ENCODE measurements at regions of chrX and their contacts with region 1.

Region 1: DNA sequence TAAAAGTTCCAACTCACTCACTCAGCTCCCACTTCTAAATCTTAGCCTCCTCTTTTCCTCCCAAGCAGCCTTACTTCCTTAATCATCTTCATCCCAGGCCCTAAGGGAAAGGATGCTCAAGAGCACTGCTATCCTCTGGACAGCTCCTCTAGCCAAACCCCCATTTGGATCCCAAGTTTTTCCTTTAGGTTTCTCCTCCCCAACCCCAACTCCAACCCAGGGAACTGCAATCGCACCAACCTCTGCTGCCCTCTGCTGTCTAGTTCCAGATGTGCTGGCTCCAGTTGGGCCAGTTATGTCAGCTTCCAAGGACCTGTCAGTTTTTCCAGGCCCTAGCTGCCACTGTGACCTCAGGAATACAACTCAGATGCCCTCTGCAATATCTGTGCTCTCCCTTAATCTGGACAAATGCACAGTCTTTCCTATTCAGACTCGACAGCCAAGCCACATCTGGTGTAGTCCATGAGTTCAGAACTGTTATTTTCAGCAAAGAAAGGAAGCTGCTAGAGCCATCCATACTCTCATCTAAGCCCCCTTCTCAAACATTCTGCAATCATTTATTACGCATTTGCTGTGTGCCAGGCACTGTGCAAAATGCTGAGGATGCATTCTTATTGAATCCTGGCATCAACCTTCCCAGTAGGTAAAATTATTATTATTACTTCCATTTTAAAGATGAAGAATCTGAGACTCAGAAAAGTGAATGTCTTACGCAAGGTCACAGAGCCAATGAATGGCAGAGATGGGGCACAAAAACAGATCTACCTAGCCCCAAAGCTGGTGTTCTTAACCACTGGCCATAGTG is 12.3 kb upstream of the XPNPEP2 start:
- DNase-seq: peak; percentile 52
- H3K27ac ChIP-seq: no peak overlapping the region
- CTCF ChIP-seq: peak; percentile 55

Region 2: GRCh38 chrX:129606918-129607317 is 119.6 kb before region 1 on chrX:
- CTCF ChIA-PET with region 1: interaction called, 19 read pairs
- POLR2A ChIA-PET with region 1: no interaction called
- DNase-seq: peak; percentile 54
- H3K27ac ChIP-seq: no peak overlapping the region
- CTCF ChIP-seq: peak; percentile 56

Region 3: DNA sequence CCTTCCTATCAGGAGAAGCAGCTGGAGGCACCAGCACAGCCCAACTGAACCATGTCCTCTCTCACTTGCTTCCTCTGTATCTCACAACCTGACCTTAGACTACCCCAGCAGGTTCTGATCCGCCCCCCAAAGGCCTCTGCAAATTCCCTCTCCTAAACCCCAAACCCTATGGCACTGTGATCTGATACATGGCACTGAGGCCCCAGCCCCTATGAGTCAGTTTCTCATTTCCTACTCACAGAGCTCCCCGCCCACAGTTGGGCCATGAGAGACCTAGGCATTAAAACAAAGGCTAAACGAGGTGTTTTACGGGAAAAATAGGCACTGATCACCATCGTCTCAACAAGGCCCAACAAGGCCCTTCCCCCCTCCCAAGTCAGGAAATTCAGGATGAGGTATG is 72.4 kb after region 1 on chrX:
- CTCF ChIA-PET with region 1: no interaction called
- POLR2A ChIA-PET with region 1: no interaction called
- DNase-seq: no peak
- H3K27ac ChIP-seq: no peak overlapping the region
- CTCF ChIP-seq: no peak

Measured in RWPE1 (cell line).